ENCODE measurements at regions of chr12 and their contacts with region 1.

Region 1: DNA sequence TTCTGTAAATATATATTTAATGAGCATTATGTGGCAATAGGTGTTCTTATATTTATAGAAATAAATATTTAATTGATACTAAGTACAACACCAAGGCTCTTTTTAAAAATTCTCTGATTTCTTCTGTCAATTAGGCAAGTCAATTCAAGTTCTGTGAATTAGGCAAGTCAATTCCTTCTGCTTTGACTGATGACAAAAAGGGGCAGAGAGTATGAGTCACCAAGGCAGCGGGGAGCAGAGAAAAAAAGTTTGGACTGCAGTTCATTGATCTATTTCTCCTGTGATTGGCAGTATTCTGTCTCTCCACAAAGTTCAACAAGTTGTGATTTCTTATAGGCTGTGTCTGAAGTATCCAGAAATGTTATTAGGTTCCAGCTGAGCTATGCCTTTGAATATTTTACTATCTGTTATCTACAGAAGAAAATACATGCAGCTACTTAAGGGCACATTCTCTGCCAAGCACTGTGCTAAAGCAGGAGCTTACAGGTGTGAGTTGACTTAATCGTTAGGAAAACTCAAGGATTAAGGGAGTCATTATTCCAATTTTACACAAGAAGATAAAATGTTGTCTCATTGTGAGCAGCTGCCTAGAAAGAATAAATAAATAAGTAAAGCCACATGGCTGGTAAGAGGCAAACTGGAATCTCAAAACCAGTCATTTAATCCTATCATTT is 206.4 kb upstream of the ALG10B start:
- ATAC-seq: no peak
- H3K4me3 ChIP-seq: no peak overlapping the region
- H3K27ac ChIP-seq: no peak overlapping the region
- H3K4me1 ChIP-seq: no peaks in the 10 kb centered on the region

Region 2: DNA sequence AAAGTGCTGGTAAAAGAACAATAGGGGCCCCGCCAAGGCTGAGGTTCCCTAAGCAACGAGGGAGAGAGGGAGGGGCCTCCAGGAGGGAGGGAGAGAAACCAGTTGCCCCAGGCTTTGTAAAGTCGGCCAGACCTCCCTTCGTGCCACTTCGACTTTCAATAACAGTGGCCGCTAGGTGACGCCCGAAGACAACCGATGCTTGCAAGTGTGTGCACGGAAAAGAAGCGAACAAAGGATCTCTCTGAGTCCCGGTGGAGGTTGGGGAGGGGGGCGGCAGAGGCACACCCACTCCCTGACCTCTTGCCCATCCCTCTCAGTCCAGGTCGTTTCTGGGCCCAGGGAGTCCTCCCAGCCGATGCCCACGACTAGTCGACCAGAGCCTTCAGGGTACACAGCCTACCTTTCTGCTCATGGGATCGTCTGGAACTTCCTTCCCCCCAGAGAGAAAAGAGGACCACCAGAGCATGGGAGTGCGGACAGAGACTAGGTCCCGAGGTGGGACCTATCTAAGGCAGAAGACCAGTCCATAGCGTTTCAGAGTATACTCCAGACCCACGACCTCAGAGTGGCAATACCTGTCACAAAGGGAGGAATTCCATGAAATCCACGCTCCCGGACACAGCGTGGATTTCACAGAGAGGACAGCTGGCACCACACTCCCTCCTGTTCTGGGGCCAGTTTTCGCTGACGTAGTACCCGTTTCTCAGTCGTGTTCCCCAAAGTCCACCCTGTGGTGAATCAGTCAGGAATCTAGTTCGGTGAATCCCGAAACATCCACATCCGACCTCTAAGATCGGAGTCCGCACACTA is 56.3 kb before region 1 on chr12:
- in situ Hi-C with region 1: loop called in 1 of 9 experiments (anchors 10 kb)
- ATAC-seq: peak in 3 of 8 experiments; percentile 10 to 50 (median 31)
- H3K4me3 ChIP-seq: no peak overlapping the region
- H3K27ac ChIP-seq: no peak overlapping the region
- H3K4me1 ChIP-seq: no peaks in the 10 kb centered on the region

Measured in motor neuron (in vitro differentiated cells).